GM10248 (cell line): ENCODE measurements at regions of chr1 and their contacts with region 1.

Region 1: GRCh38 chr1:193019442-193020026 is 39.6 kb downstream of the UCHL5 start:
- DNase-seq: peak; percentile 11
- CTCF ChIP-seq: peak; percentile 32

Region 2: GRCh38 chr1:193005785-193006184 is 13.7 kb before region 1 on chr1:
- CTCF ChIA-PET with region 1: interaction called, 11 read pairs
- POLR2A ChIA-PET with region 1: no interaction called
- DNase-seq: no peak
- CTCF ChIP-seq: no peak